ENCODE measurements at regions of chr1 and their contacts with region 1.

Region 1: GRCh38 chr1:75710832-75711231 is 13.7 kb upstream of the ACADM start:
- DNase-seq: no peak
- H3K4me3 ChIP-seq: no peak overlapping the region
- H3K27ac ChIP-seq: no peak overlapping the region
- H3K4me1 ChIP-seq: no peaks in the 10 kb centered on the region
- H3K27me3 ChIP-seq: no peaks in the 10 kb centered on the region
- CTCF ChIP-seq: no peak
- EP300 ChIP-seq: no peak
- POLR2A ChIP-seq: no peak
- RAD21 ChIP-seq: no peak

Region 2: DNA sequence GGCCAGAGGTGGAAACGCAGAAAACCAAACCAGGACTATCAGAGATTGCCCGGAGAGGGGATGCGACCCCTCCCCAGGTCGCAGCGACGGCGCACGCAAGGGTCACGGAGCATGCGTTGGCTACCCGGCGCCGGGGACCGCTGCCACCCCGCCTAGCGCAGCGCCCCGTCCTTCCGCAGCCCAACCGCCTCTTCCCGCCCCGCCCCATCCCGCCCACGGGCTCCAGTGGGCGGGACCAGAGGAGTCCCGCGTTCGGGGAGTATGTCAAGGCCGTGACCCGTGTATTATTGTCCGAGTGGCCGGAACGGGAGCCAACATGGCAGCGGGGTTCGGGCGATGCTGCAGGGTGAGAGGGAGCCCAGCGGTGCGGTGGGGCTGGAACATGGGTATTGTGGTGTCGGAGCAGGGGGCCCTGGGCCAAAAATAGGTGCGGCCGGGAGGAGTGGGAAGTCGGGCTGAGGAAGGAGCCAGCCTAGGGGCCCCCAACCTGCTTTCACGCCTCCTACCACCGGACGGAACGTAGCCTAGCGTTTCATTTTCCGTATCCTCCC is 13.7 kb after region 1 on chr1 and contains the start of gene ACADM:
- CTCF ChIA-PET with region 1: no interaction called
- POLR2A ChIA-PET with region 1: interaction called, 10 read pairs
- DNase-seq: peak; percentile 23 to 84
- H3K4me3 ChIP-seq: peak within 1 kb of the TSS; percentile 63 to 91 (median 85)
- H3K27ac ChIP-seq: peak within 1 kb of the TSS; percentile 88
- H3K4me1 ChIP-seq: peaks cover 0 to 12% (median 9%) of the 10 kb centered on the region in 4 experiments; a peak in 4 of 7 replicates
- H3K27me3 ChIP-seq: no peaks in the 10 kb centered on the region
- CTCF ChIP-seq: no peak
- EP300 ChIP-seq: no peak
- POLR2A ChIP-seq: peak in 1 of 2 experiments; percentile 72; a peak in 2 of 3 replicates
- RAD21 ChIP-seq: no peak
- total RNA-seq, gene ACADM: 40.0 and 41.7 TPM in 2 replicates